ENCODE measurements at regions of chr14 and their contacts with region 1.

Region 1: DNA sequence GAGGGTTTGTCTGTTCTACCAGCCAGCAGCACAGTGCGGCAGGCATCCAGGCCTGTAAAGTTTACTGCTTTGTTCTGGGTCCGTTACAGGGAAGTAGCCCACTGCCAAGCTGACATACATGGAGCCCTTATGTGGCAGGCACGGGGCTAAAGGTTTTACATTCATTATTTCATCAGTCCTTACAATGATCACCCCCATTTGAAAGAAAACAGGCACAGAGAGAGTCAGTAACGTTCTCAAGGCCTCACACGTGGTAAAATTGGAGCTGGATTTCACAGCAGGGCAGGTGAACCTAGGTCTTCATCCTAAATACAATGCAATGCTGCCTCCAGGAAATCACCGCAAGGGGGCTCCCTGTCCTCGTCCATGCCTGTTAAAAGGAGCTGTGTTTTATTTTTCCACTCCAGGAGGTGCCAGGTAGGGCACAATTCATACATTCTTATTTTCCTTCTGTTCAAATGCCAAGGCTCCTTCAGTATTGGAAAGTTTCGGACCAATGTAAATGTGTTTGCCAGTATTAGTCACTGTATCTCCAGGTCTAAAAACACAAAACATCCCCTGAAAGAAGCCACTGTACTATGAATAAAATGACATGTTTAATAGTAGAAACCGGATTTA is 172.2 kb upstream of the GZMB start:
- DNase-seq: peak; percentile 69 to 70
- ATAC-seq: peak; percentile 47 to 89 (median 78)
- H3K4me3 ChIP-seq: no peak overlapping the region
- H3K27ac ChIP-seq: peak overlapping the region in 2 of 10 donors; percentile 11 to 15
- H3K4me1 ChIP-seq: peaks cover 6 to 46% (median 27%) of the 10 kb centered on the region in 9 donors
- H3K27me3 ChIP-seq: no peaks in the 10 kb centered on the region
- CTCF ChIP-seq: peak; percentile 70 to 95 (median 88)

Region 2: GRCh38 chr14:24734878-24735500 is 71.2 kb before region 1 on chr14:
- intact Hi-C with region 1: loop called in 3 of 10 experiments (anchors 10 kb)
- DNase-seq: peak in 1 of 2 donors; percentile 66
- ATAC-seq: peak in 6 of 8 donors; percentile 42 to 83 (median 72)
- H3K4me3 ChIP-seq: no peak overlapping the region
- H3K27ac ChIP-seq: no peak overlapping the region
- H3K4me1 ChIP-seq: peaks cover 0 to 5% (median 0%) of the 10 kb centered on the region in 9 donors
- H3K27me3 ChIP-seq: no peaks in the 10 kb centered on the region
- CTCF ChIP-seq: peak; percentile 58 to 91 (median 80)

Region 3: DNA sequence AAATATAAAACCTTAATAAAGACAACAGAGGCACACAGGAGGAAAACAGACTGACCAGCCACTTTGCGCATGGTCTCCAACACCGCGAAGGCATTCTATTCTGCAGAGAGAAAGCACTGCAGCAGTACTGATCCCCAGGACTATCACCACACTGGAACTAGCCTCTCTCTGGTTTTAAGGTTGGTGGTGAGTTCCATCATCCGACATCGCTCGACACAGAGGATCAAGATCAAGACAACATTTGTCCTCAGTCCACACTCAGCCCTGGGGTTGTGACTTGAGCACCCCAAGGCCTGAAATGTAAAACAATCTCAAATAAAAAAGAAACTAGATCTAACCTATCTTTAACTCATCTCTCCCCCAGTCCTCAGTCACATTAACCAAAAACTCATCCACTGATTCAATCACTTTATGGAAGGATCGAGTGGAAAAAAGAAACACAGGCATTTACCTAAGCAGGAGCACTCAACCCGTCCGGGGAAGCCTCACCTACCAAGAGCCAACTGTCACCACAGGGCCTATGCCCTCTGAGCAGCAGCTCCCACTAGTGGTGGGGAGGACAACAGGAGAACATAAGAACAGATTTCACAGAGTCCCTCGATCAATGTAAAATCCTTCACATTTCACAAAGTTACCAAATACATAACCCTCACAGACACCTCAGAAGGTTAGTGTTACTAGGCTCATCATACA is 226.1 kb after region 1 on chr14:
- intact Hi-C with region 1: loop called in 1 of 10 experiments (anchors 10 kb)
- DNase-seq: no peak
- ATAC-seq: no peak
- H3K4me3 ChIP-seq: no peak overlapping the region
- H3K27ac ChIP-seq: no peak overlapping the region
- H3K4me1 ChIP-seq: peaks cover 0 to 36% (median 6%) of the 10 kb centered on the region in 9 donors
- H3K27me3 ChIP-seq: no peaks in the 10 kb centered on the region
- CTCF ChIP-seq: peak in 4 of 9 donors; percentile 12 to 36 (median 16)

Region 4: DNA sequence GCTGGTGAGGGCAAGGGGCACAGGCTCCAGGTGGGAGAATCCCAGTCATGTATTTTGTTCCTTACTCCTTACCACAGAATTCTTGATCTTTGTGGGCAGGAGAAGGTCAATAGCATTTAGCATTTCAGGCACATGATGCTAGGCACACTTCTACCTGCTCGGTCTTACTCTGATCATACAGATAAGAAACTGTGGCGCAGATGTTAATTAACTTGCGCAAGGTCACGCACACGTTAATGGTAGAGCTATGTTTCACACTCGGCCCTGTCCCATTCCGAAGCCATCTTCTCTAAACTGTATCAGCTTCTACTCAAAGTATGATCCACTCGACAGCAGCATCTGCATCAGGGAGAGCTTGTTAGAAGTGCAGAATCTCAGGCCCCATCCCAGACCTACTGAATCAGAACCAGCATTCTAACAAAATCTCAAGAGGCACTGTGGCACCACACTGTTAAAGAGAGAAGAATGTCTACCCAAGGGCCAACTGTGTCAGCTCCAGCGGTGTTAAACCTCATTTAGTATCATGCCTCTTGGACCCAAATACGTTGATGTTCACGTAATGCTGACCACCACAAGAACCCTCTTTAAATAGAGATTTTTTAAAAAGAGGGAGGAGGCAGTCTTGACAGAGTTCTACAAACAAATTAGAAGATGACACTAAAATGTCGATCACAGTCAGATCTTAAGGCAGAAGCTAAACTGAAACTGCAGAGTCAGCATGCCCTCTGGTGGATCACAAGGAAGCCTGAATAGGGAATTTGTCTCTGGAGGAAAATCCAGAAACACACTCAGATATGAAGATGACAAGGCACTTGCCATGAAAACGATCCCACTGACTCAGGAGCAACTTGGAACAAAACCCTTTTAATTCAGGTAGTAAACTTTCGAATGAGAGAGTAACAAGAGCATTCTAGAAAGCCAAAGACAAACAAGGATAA is 236.5 kb after region 1 on chr14:
- intact Hi-C with region 1: loop called (anchors 1 to 10 kb)
- DNase-seq: peak in 1 of 2 donors; percentile 50
- ATAC-seq: peak in 6 of 8 donors; percentile 23 to 60 (median 49)
- H3K4me3 ChIP-seq: peak overlapping the region in 2 of 10 donors; percentile 16 to 26
- H3K27ac ChIP-seq: peak overlapping the region in 3 of 10 donors; percentile 2 to 52 (median 11)
- H3K4me1 ChIP-seq: peaks cover 0 to 52% (median 31%) of the 10 kb centered on the region in 9 donors
- H3K27me3 ChIP-seq: peaks cover 0 to 2% (median 0%) of the 10 kb centered on the region in 7 donors
- CTCF ChIP-seq: peak in 8 of 9 donors; percentile 44 to 72 (median 60)

Region 5: DNA sequence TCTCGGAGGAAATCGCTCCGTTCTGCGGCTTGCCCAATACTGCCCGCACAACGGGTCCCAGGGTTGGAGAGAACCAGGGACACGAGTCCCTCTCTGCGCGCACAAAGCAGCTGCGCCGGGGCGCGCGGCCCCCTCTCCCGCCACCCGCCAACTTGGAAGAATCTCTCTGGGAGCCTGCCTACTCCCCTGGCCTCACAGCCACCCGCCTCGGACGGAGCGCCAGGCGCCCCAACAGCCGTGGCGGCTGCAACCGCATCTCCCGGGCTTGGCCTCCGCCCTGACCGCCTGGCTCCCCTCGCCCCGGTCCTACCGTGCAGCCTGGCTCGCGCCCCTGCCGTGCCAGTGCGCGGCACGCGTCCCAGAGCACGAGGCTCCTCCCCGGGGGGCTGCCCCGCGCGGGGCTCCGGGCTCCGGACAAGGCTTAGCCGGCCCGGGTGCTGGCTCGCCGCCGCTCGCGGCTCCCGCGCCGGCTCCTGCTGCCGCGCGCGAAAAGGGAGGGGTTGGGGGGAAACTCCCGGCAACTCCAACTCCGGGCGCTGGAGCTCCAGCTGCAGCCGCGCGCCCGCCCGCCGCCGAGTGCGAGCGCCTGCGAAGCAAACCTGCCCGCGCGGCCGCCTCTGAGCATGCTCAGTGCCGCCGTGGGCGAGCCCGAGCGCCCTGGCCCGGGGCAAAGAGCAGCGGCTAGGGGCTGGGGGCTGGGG is 243.5 kb after region 1 on chr14 and contains the start of gene STXBP6:
- intact Hi-C with region 1: loop called in 5 of 10 experiments (anchors 5 kb)
- DNase-seq: peak; percentile 74 to 83
- ATAC-seq: peak; percentile 79 to 92 (median 88)
- H3K4me3 ChIP-seq: peak within 1 kb of the TSS; percentile 30 to 83 (median 77)
- H3K27ac ChIP-seq: peak within 1 kb of the TSS; percentile 70 to 95 (median 89)
- H3K4me1 ChIP-seq: peaks cover 0 to 42% (median 33%) of the 10 kb centered on the region in 9 donors
- H3K27me3 ChIP-seq: peaks cover 0 to 61% (median 0%) of the 10 kb centered on the region in 7 donors
- CTCF ChIP-seq: peak in 1 of 9 donors; percentile 6
- total RNA-seq, gene STXBP6: 12.2 to 49.0 (median 24.4) TPM

Region 6: DNA sequence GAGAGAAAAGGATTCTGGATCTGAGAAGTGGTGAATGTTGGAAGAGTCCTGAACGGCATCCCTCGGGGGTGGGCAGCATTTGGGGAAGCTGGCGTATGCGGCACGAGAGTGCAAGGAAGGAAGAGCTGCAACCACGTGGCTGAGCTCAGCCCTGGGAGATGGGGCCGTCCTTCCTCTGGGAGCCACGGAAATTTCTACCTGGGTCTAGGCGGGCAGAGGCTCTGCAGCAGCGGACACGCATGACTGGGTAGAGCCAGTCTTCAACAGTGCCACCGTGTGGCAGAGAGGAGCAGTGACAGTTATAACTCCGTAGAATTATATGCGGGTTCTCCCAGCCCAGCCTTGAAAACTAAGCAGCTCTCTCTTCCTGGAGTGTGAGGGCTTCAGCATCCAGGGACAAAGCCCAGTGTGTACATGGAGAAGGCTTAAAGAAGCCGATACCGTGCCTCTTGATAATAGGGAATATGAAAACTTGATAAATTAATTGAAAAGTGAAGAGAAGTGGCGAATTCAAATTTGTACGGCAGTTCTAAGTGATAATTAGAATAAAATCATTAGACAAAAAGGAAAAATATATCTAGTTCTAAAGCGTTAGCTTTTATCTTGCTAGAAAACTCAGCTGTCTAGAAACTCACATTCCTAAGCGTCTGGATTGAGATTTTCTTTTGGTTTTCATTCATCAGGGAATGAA is 326.7 kb after region 1 on chr14:
- intact Hi-C with region 1: loop called (anchors 1 to 5 kb)
- DNase-seq: peak; percentile 44 to 51
- ATAC-seq: peak; percentile 92 to 97 (median 96)
- H3K4me3 ChIP-seq: peak overlapping the region in 3 of 10 donors; percentile 6 to 9 (median 8)
- H3K27ac ChIP-seq: no peak overlapping the region
- H3K4me1 ChIP-seq: peaks cover 0 to 9% (median 0%) of the 10 kb centered on the region in 9 donors
- H3K27me3 ChIP-seq: peaks cover 0 to 34% (median 11%) of the 10 kb centered on the region in 7 donors
- CTCF ChIP-seq: peak; percentile 77 to 93 (median 87)

Region 7: DNA sequence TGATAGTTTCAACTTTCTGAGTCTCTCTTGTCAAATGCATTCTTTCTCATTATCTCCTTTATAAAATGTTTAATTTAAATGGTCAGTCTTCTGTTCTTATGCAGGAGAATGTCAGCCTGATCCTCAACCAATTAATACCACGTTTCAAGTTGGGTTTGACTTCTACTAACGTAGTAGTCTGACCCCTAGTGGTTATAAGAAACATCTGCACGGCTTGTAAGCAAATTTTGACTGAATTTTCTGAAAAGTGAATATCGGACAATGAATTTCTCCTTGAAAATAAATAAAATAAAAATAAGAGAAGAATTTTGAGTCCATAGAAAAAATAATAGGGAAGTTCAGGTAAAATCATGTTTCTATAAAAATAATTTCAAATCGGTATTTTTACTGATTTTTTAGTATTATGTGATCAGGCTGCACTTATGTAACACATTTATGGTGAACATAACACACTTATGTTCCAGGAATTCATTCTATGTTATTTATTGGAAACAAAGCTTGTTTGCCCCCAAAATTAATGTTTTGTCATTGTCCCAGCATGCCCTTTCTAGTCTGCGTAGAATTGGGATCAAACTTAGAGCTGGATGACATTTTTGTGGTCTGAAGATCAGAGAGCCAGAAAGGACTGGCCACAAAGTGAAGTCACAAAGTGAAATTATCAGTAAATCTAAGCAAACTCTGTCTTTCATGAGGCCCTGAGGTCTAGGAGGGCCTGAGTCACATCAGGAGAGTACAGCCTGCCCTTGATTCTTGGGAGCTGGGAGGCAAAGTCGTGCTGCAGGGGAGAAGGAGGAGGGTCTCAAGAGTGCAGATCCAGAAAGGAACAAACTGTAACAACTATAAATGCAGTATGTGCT is 345.0 kb after region 1 on chr14:
- intact Hi-C with region 1: loop called in 4 of 10 experiments (anchors 1 to 5 kb)
- DNase-seq: no peak
- ATAC-seq: no peak
- H3K4me3 ChIP-seq: no peak overlapping the region
- H3K27ac ChIP-seq: no peak overlapping the region
- H3K4me1 ChIP-seq: peaks cover 0 to 4% (median 0%) of the 10 kb centered on the region in 9 donors
- H3K27me3 ChIP-seq: peaks cover 0 to 6% (median 0%) of the 10 kb centered on the region in 7 donors
- CTCF ChIP-seq: peak; percentile 54 to 90 (median 83)

Measured in heart right ventricle (tissue), 16 donors.